PC-9 (cell line): ENCODE measurements at regions of chr3 and their contacts with region 1.

Region 1: GRCh38 chr3:36362967-36363366 is 17.3 kb upstream of the STAC start:
- DNase-seq: peak; percentile 55 to 87
- H3K4me3 ChIP-seq: no peak overlapping the region; the same call in 1 of the 2 replicates
- H3K27ac ChIP-seq: peak overlapping the region; percentile 71
- H3K4me1 ChIP-seq: peaks cover 30% of the 10 kb centered on the region
- H3K27me3 ChIP-seq: no peaks in the 10 kb centered on the region
- CTCF ChIP-seq: no peak

Region 2: DNA sequence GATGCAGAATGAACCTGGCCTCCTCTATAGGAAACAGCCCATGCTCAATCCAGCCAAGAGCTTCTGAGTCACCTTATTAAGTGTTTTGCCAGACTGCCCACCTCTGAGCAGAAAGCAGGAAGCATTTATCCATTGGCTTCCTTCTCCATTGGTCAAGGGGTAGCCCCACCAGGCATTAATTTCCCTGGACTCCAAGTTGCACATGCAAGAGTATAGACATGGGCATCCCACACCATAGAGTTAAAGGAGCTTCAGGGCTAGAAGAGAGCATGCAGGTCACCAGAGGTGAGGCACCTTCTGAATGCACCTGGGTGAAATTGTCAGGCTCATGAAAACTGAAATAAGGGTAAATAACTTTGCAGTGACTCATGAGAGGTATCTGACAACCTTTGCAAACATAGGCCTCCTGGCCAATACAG is 213.5 kb before region 1 on chr3:
- CTCF ChIA-PET with region 1: no interaction called
- POLR2A ChIA-PET with region 1: no interaction called
- intact Hi-C with region 1: loop called (anchors 10 kb)
- DNase-seq: peak; percentile 46 to 80
- H3K4me3 ChIP-seq: no peak overlapping the region
- H3K27ac ChIP-seq: peak overlapping the region; percentile 41
- H3K4me1 ChIP-seq: peaks cover 21% of the 10 kb centered on the region
- H3K27me3 ChIP-seq: no peaks in the 10 kb centered on the region
- CTCF ChIP-seq: no peak

Region 3: DNA sequence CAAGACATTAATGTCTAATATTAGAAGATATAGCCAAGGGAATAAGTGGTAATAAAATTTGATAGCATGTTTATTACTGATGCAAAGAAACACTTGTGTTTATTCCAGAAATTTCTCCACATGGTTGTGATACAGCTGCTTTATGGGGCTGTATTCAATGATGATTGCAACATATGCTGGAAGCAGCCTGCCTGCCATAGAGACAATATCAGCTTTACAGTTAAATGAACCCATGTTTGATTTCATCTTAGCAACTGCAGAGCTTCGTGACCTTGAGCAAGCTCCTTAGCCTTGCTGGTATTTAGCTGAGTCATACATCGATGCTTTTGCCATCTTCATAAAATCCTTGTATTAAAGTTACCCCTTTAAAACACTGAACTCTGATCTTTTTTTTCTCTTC is 150.7 kb before region 1 on chr3:
- CTCF ChIA-PET with region 1: no interaction called
- POLR2A ChIA-PET with region 1: no interaction called
- intact Hi-C with region 1: loop called (anchors 5 kb)
- DNase-seq: no peak
- H3K4me3 ChIP-seq: no peak overlapping the region
- H3K27ac ChIP-seq: no peak overlapping the region
- H3K4me1 ChIP-seq: peaks cover 10% of the 10 kb centered on the region
- H3K27me3 ChIP-seq: no peaks in the 10 kb centered on the region
- CTCF ChIP-seq: no peak

Region 4: DNA sequence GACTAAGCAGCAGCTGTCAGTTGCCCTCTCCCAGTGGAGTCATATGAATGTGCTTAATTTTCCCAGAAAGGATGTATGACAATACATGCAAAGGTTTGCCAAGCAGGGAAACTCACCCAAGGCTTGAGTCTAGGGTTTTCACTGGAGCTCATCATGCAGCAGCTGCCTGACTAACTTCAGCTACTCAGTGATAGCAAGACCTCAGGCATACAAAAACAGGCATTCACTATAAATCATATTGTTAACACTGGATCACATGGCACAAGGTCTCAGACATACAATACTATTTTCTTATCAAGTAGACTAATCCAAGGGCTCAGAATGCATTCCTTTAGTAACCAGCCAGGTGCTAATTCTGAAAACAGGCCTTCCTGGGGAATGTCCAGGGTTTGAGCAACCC is 67.7 kb before region 1 on chr3:
- CTCF ChIA-PET with region 1: no interaction called
- POLR2A ChIA-PET with region 1: no interaction called
- intact Hi-C with region 1: loop called (anchors 2 kb)
- DNase-seq: no peak
- H3K4me3 ChIP-seq: no peak overlapping the region
- H3K27ac ChIP-seq: no peak overlapping the region
- H3K4me1 ChIP-seq: peaks cover 30% of the 10 kb centered on the region
- H3K27me3 ChIP-seq: no peaks in the 10 kb centered on the region
- CTCF ChIP-seq: no peak

Region 5: DNA sequence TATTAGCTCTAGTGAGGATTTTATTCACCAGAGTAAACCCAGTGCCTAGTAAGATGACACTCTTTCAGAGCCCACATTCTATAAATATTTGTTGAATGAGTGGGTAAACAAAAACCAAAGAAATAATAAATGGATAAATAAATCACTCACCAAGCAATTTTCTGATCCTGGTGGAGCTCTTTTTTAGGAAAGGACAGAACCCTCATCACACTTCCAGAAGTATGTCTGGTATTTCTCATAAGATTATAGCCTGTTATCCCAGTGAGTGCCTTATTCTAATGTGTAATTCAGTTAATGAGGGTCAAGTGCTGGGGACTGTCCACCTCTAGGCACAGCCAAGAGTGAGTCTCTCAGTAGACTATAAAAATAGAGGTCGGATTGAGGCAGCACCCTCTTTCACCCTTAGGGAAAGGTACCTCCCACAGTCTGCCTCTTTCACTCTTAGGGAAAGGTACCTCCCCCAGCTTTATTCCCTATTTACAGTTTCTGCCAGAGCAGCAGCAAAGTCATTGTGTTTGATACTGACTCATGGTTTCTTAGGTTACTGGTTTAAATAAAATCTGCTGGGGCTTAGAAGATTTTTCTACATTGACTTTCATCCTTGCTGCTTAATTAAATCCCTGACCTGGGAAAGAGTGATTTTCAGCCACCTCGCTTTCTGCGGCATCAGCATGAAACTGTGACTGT is 162.3 kb after region 1 on chr3:
- CTCF ChIA-PET with region 1: no interaction called
- POLR2A ChIA-PET with region 1: no interaction called
- intact Hi-C with region 1: loop called (anchors 10 kb)
- DNase-seq: peak; percentile 34 to 81
- H3K4me3 ChIP-seq: no peak overlapping the region
- H3K27ac ChIP-seq: peak overlapping the region; percentile 87
- H3K4me1 ChIP-seq: peaks cover 16% of the 10 kb centered on the region
- H3K27me3 ChIP-seq: no peaks in the 10 kb centered on the region
- CTCF ChIP-seq: no peak

Region 6: DNA sequence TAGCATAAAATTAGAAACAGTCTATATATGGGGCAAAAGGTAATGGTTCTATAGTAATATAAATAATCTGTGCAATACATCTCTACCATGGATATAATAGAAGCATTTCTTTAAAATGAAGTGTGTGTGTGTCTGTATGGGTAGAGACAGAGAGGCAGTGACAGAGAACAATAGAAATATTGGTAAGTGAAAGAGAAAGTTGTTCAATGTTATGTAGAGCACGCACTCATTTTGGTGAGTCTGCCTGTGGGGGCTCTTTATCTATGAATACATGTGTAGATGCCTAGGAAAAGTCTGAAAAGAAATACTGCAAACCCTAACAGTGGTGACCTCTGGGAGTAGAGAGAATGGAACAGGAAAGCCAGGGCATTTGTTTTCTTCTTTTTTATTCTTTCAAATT is 200.0 kb after region 1 on chr3:
- CTCF ChIA-PET with region 1: no interaction called
- POLR2A ChIA-PET with region 1: no interaction called
- intact Hi-C with region 1: no loop called
- DNase-seq: no peak
- H3K4me3 ChIP-seq: no peak overlapping the region
- H3K27ac ChIP-seq: no peak overlapping the region
- H3K4me1 ChIP-seq: no peaks in the 10 kb centered on the region
- H3K27me3 ChIP-seq: no peaks in the 10 kb centered on the region
- CTCF ChIP-seq: no peak

Region 7: GRCh38 chr3:36923523-36923943 is 560.6 kb after region 1 on chr3:
- CTCF ChIA-PET with region 1: no interaction called
- POLR2A ChIA-PET with region 1: no interaction called
- intact Hi-C with region 1: no loop called
- DNase-seq: no peak
- H3K4me3 ChIP-seq: no peak overlapping the region
- H3K27ac ChIP-seq: no peak overlapping the region
- H3K4me1 ChIP-seq: no peaks in the 10 kb centered on the region
- H3K27me3 ChIP-seq: no peaks in the 10 kb centered on the region
- CTCF ChIP-seq: no peak